ENCODE measurements at regions of chr3 and their contacts with region 1.

Region 1: DNA sequence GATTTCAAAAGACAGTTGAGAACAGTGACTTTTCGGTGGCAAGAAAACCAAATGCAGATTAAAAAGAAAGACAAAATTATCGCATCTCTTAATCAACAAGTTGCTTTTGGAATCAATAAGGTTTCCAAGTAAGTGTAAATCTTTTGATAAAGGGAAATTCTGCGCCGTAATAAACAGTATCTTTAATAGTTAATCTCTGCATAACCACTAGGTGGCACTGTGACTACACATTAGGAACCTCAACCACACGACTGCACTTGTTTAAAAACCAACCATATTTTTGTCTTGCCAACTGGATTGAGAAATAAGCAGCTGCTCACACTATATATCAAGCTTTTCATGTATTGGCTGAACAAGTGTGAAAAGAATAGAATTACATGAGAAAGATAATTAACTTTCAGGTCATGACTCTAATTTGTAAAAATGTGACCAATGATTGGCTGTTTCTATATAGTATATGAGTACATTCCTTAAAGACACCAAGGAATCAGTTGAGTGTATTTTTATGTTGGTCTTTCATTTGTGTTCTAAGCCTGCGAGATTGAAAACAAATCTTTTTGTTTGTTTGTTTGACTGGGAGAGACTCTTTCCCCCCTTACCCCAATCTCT is 72.7 kb downstream of the DZIP3 start:
- DNase-seq: no peak

Region 2: DNA sequence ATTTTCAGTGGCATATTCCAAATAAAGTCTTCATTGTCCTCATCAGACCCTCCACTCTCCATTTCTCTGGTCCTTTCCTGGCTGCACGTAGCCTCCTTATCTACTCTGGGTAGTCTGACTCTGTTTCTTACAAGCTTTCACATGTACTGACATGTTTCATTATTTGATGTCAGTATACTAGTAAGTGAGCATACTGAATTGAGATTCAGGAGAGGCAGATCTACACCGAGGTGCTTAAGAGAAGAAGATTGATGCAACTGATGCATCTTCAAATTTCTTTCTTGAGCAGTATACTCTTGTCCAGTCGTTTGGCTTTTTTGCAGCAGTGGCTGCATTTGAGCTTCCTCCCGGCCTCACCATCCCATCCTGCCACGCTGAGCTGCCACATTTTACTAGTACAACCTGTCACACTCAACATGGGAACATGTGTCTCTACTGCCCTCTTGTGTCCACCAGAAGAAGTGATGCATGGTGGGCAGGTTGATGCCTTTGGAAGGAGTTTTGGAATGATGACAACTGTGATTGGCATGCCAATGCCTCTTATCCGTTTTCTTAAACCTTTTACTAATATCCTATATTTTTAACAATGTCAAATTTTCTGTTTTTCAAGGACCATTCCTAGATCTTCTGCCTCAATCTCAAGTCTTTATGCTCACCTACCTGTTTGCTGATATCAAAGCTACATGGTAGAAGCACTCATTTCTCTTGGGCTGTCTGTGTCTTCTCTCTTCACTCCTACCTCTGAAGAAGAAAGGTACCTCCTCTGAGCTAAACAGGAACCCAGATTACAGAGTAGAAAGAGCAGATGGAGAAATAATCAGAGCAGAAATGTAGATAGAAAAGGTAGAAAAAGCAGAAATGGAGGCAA is 252.8 kb after region 1 on chr3:
- intact Hi-C with region 1: loop called (anchors 2 kb)
- DNase-seq: no peak

Region 3: GRCh38 chr3:109081746-109082510 is 419.7 kb after region 1 on chr3:
- intact Hi-C with region 1: loop called (anchors 10 kb)
- DNase-seq: no peak

Measured in cardiac septum (tissue), 1 donor.